ENCODE measurements at regions of chr3 and their contacts with region 1.

Region 1: DNA sequence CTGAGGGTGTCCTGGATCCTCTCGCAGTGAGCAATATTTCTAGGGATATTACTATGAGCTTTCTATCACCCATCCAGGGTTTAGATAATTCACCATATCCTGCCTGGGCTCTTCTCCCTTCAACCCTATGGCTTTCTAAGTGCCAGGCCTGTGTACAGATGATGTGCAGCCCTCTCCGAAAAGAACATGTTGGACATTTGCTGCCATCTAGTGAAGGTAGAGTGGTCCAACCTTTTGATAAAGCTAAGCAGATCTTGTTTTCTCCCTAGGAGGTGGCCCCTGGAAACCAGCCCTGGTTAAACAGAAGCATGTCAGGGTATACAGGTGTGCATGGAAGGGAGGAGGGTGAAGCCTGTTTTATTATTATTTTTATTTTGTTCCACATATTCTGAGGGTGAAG is 27.9 kb upstream of the SCN10A start:
- DNase-seq: no peak
- ATAC-seq: peak; percentile 80

Region 2: DNA sequence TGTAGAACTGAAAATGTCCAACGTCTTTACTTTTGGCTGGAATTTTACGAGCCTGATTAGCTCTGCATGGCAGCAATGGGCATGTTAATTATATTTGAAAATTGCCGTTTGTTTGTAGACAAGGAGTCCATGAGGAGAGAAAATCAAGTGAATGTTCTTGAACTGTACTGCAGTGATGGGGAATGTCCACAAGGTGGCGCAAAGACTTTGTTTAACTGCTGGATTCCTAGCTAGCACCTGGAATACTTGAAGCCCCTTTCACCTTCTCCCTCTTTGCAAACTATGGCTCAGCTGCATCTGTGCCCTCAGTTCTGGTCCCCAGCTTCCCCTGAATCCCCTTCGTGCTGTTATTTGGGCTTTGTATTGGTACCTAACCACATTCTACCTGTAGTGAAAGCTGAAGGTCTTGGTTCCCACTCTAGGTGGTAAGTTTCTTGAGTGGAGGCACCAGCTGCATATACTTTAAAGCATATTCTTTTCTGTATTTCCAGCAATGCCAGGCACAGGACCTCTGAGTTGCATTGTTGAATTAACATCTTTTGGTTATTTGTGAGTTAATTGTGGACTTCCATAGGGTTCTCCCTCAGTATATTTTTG is 322.4 kb before region 1 on chr3:
- intact Hi-C with region 1: loop called (anchors 5 kb)
- DNase-seq: no peak
- ATAC-seq: peak; percentile 57

Region 3: GRCh38 chr3:38689774-38690173 is 154.1 kb before region 1 on chr3:
- intact Hi-C with region 1: loop called (anchors 1 kb)
- DNase-seq: no peak
- ATAC-seq: no peak

Region 4: GRCh38 chr3:38738630-38739395 is 105.1 kb before region 1 on chr3:
- intact Hi-C with region 1: loop called (anchors 5 kb)
- DNase-seq: no peak
- ATAC-seq: no peak